Activated CD4-positive, alpha-beta T cell treated with anti-CD3 and anti-CD28 coated beads, Interleukin-2, amount 10 ng/mL, durations not matched to agents 7 days and 5 days (primary cell): ENCODE measurements at regions of chr15 and their contacts with region 1.

Region 1: GRCh38 chr15:63212050-63213004 is 22.9 kb downstream of the RAB8B start:
- DNase-seq: no peak
- H3K4me3 Mint-ChIP-seq: peak overlapping the region; percentile 28
- H3K27ac Mint-ChIP-seq: peak overlapping the region; percentile 83
- H3K4me1 Mint-ChIP-seq: peaks cover 72% of the 10 kb centered on the region
- H3K27me3 Mint-ChIP-seq: no peaks in the 10 kb centered on the region

Region 2: GRCh38 chr15:62785881-62786828 is 426.2 kb before region 1 on chr15:
- CTCF ChIA-PET with region 1: no interaction called
- POLR2A ChIA-PET with region 1: no interaction called
- DNase-seq: no peak
- H3K4me3 Mint-ChIP-seq: no peak overlapping the region
- H3K27ac Mint-ChIP-seq: no peak overlapping the region
- H3K4me1 Mint-ChIP-seq: no peaks in the 10 kb centered on the region
- H3K27me3 Mint-ChIP-seq: peaks cover 7% of the 10 kb centered on the region

Region 3: GRCh38 chr15:63122002-63122893 is 90.1 kb before region 1 on chr15:
- CTCF ChIA-PET with region 1: no interaction called
- POLR2A ChIA-PET with region 1: no interaction called
- DNase-seq: peak; percentile 82
- H3K4me3 Mint-ChIP-seq: peak overlapping the region; percentile 91
- H3K27ac Mint-ChIP-seq: peak overlapping the region; percentile 86
- H3K4me1 Mint-ChIP-seq: peaks cover 15% of the 10 kb centered on the region
- H3K27me3 Mint-ChIP-seq: peaks cover 2% of the 10 kb centered on the region

Region 4: GRCh38 chr15:63191895-63192618 is 20.3 kb before region 1 on chr15:
- CTCF ChIA-PET with region 1: interaction called, 15 read pairs
- POLR2A ChIA-PET with region 1: no interaction called
- DNase-seq: peak; percentile 81
- H3K4me3 Mint-ChIP-seq: peak overlapping the region; percentile 96
- H3K27ac Mint-ChIP-seq: peak overlapping the region; percentile 98
- H3K4me1 Mint-ChIP-seq: peaks cover 71% of the 10 kb centered on the region
- H3K27me3 Mint-ChIP-seq: no peaks in the 10 kb centered on the region

Region 5: GRCh38 chr15:63233667-63234423 is 21.5 kb after region 1 on chr15:
- CTCF ChIA-PET with region 1: interaction called, 3 read pairs
- POLR2A ChIA-PET with region 1: interaction called, 12 read pairs
- DNase-seq: no peak
- H3K4me3 Mint-ChIP-seq: no peak overlapping the region
- H3K27ac Mint-ChIP-seq: no peak overlapping the region
- H3K4me1 Mint-ChIP-seq: peaks cover 65% of the 10 kb centered on the region
- H3K27me3 Mint-ChIP-seq: no peaks in the 10 kb centered on the region

Region 6: GRCh38 chr15:63246691-63247464 is 34.6 kb after region 1 on chr15:
- CTCF ChIA-PET with region 1: no interaction called
- POLR2A ChIA-PET with region 1: no interaction called
- DNase-seq: no peak
- H3K4me3 Mint-ChIP-seq: no peak overlapping the region
- H3K27ac Mint-ChIP-seq: no peak overlapping the region
- H3K4me1 Mint-ChIP-seq: peaks cover 39% of the 10 kb centered on the region
- H3K27me3 Mint-ChIP-seq: no peaks in the 10 kb centered on the region